WTC11 (cell line): ENCODE measurements at regions of chr3 and their contacts with region 1.

Region 1: DNA sequence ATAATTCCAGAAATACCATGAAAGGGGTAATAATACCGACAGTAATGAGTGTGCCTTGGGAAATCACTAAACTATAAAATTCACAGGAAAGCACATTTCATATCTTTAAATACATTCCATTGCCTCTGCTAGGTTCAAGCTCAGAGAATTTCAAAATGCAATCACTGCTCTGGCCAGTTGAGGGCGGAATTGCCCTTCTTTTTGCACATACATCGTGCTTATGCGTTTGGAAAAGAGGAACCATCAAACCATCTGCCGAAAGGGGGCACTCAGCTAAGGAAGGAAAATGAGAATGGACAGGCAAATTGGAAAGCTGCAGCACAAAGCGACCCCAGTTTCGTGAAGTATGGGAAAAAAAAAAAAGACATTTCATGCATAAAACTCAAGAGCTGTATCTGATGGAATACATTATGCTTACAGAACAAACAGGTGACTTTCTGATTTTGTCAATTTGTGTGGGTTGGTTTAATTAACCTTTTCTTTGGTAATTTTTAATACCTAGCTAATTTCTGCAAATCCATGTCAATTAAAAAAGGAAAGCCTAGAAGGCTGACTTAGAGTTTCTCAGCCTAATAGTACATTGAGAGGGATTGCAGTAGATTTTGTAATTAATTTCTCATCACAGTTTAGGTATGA is 61.4 kb downstream of the TUSC7 start:
- DNase-seq: peak; percentile 83
- ATAC-seq: peak; percentile 91
- H3K4me3 Mint-ChIP-seq: no peak overlapping the region
- H3K27ac Mint-ChIP-seq: no peak overlapping the region
- H3K4me1 Mint-ChIP-seq: peaks cover 21% of the 10 kb centered on the region
- H3K27me3 Mint-ChIP-seq: no peaks in the 10 kb centered on the region
- CTCF ChIP-seq: peak; percentile 81

Region 2: GRCh38 chr3:116614795-116615362 is 156.1 kb before region 1 on chr3:
- CTCF ChIA-PET with region 1: no interaction called
- POLR2A ChIA-PET with region 1: no interaction called
- DNase-seq: no peak
- ATAC-seq: peak; percentile 78
- H3K4me3 Mint-ChIP-seq: no peak overlapping the region
- H3K27ac Mint-ChIP-seq: no peak overlapping the region
- H3K4me1 Mint-ChIP-seq: peaks cover 3% of the 10 kb centered on the region; the same call in 1 of the 2 replicates
- H3K27me3 Mint-ChIP-seq: no peaks in the 10 kb centered on the region
- CTCF ChIP-seq: peak; percentile 44

Region 3: GRCh38 chr3:116785226-116785625 is 14.3 kb after region 1 on chr3:
- CTCF ChIA-PET with region 1: interaction called, 25 read pairs
- POLR2A ChIA-PET with region 1: no interaction called
- DNase-seq: no peak
- ATAC-seq: peak; percentile 87
- H3K4me3 Mint-ChIP-seq: no peak overlapping the region
- H3K27ac Mint-ChIP-seq: peak overlapping the region; percentile 40; the same call in 1 of the 2 replicates
- H3K4me1 Mint-ChIP-seq: peaks cover 28% of the 10 kb centered on the region
- H3K27me3 Mint-ChIP-seq: no peaks in the 10 kb centered on the region; the same call in 1 of the 2 replicates
- CTCF ChIP-seq: no peak

Region 4: GRCh38 chr3:116863822-116864589 is 93.1 kb after region 1 on chr3:
- CTCF ChIA-PET with region 1: interaction called, 31 read pairs
- POLR2A ChIA-PET with region 1: no interaction called
- DNase-seq: peak; percentile 22
- ATAC-seq: peak; percentile 89
- H3K4me3 Mint-ChIP-seq: no peak overlapping the region
- H3K27ac Mint-ChIP-seq: no peak overlapping the region
- H3K4me1 Mint-ChIP-seq: peaks cover 3% of the 10 kb centered on the region; the same call in 1 of the 2 replicates
- H3K27me3 Mint-ChIP-seq: no peaks in the 10 kb centered on the region
- CTCF ChIP-seq: no peak

Region 5: GRCh38 chr3:117010318-117010717 is 239.4 kb after region 1 on chr3:
- CTCF ChIA-PET with region 1: interaction called, 73 read pairs
- POLR2A ChIA-PET with region 1: no interaction called
- DNase-seq: no peak
- ATAC-seq: no peak
- H3K4me3 Mint-ChIP-seq: no peak overlapping the region
- H3K27ac Mint-ChIP-seq: no peak overlapping the region
- H3K4me1 Mint-ChIP-seq: no peaks in the 10 kb centered on the region
- H3K27me3 Mint-ChIP-seq: no peaks in the 10 kb centered on the region
- CTCF ChIP-seq: no peak

Region 6: DNA sequence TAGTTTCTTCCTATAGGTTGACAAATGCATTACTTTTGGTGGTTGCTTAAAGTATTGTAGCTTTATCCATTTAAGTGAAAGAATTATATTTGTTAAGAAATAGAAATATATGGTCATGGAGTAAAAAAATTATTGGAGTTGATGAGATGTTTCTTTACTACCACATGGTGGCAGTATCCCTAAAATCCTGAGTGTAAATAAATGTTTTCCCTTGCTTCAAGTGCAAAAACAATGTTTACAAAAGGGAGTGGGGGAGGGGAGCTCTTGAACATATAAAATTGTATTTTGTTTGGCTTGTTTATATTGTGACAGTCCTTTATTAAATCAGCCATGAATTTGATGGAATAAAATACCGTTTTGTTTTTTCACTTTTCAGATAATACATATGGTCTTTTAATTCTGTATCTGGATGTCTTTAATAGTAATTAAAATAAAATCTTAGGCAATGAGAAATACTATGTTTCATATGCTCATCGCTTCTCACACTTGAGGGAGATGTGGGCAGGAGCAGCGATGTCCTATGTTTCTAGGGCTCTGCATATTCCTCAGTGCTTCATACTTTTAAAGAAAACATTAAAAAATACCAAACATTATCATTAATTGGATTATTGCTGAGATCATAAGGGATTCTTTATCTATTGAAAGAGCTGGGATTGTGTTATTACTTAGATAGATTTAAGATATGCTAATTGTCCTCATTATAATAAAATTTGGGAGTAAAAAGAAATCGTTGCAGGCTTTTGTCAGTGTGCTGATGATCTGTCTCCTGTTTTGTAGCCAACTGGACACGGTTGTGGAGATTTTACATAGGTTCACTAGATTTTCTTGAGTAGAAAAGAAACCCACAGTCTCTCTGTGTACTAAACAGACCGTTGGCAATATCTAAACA is 288.4 kb after region 1 on chr3:
- CTCF ChIA-PET with region 1: interaction called, 16 read pairs
- POLR2A ChIA-PET with region 1: no interaction called
- DNase-seq: no peak
- ATAC-seq: no peak
- H3K4me3 Mint-ChIP-seq: no peak overlapping the region
- H3K27ac Mint-ChIP-seq: no peak overlapping the region
- H3K4me1 Mint-ChIP-seq: peaks cover 63% of the 10 kb centered on the region
- H3K27me3 Mint-ChIP-seq: no peaks in the 10 kb centered on the region
- CTCF ChIP-seq: peak; percentile 36; the same call in 1 of the 2 replicates

Region 7: DNA sequence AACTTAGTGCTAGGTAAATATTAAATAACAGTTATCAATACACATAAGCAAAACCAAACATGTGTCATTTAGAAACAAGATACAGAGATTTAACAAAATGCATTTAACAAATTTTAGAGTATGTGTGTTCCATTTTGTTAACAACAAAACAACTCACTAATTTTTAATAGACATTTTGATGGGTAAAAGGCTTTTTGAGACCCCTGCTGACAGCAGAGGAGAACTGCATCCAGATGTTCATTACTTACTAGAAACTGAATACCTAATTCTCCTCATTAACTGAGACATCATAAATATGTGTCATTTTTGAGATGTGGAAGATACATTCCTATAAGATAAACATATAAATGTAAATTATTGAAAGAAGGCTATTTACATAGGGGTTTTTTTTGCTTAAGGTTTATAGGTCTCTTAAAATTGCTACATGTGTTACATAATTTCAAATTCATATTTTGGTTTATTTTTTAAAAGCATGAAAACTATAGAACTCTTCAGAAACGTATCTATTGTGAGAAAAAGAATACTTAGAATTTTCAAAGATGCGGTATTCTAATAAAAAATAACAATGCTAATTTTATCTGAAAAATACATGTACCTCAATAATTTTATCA is 948.5 kb after region 1 on chr3:
- CTCF ChIA-PET with region 1: interaction called, 10 read pairs
- POLR2A ChIA-PET with region 1: no interaction called
- DNase-seq: no peak
- ATAC-seq: no peak
- H3K4me3 Mint-ChIP-seq: no peak overlapping the region
- H3K27ac Mint-ChIP-seq: no peak overlapping the region
- H3K4me1 Mint-ChIP-seq: peaks cover 6% of the 10 kb centered on the region
- H3K27me3 Mint-ChIP-seq: no peaks in the 10 kb centered on the region
- CTCF ChIP-seq: peak; percentile 60